ENCODE measurements at regions of chr13 and their contacts with region 1.

Region 1: DNA sequence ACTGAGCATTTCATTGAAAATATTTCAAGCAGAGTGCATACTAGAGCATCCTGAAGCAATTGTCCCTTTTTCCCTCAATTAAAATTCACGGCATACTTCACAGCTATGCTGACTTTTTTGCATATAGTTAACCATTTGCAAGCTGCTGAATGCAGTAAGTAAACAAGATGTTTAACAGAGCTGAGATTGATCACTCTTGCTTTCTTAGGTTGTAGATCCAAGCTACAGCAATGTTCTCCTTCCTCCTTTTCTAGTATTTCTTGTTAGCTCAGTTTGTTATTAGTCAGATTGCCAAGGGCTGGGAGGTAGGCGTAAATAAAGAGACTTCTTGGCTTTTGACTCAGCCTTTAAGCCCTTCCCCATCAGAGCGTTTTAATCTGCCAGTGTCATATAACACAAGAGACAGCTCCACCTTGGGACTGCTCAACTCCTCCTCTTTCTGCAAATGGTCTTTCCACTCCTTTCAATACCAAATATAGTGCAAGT is at the start of gene SLITRK6:
- DNase-seq: peak; percentile 90
- H3K4me3 Mint-ChIP-seq: peak within 1 kb of the TSS; percentile 74
- H3K27ac Mint-ChIP-seq: peak within 1 kb of the TSS; percentile 91
- H3K4me1 Mint-ChIP-seq: peaks cover 15% of the 10 kb centered on the region
- H3K27me3 Mint-ChIP-seq: no peaks in the 10 kb centered on the region
- CTCF ChIP-seq: no peak
- total RNA-seq, gene SLITRK6: 5.5 and 12.0 TPM in 2 replicates

Region 2: DNA sequence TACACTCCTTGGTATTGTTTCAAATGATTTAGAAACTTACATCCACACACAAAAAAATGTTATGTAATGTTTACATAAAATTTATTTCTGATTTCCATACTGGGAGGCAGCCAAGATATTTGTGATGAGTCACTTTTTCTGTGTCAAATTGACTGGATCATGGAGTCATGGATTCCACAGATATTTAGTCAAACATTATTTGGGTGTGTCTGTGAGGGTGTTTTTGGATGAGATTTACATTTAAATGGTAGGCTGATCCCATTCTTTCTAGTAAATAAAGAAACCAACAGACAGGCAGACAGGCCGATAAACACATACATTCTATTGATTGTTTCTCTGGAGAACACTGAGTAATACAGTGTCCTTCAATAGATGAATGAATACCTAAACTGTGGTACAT is 562.7 kb before region 1 on chr13:
- CTCF ChIA-PET with region 1: interaction called, 3 read pairs
- POLR2A ChIA-PET with region 1: interaction called, 3 read pairs
- intact Hi-C with region 1: loop called (anchors 10 kb)
- DNase-seq: peak; percentile 92
- H3K4me3 Mint-ChIP-seq: peak overlapping the region; percentile 55
- H3K27ac Mint-ChIP-seq: peak overlapping the region; percentile 88
- H3K4me1 Mint-ChIP-seq: peaks cover 19% of the 10 kb centered on the region
- H3K27me3 Mint-ChIP-seq: no peaks in the 10 kb centered on the region
- CTCF ChIP-seq: no peak

Region 3: GRCh38 chr13:85261757-85262346 is 537.3 kb before region 1 on chr13:
- CTCF ChIA-PET with region 1: no interaction called
- POLR2A ChIA-PET with region 1: no interaction called
- intact Hi-C with region 1: loop called (anchors 5 kb)
- DNase-seq: peak; percentile 50
- H3K4me3 Mint-ChIP-seq: no peak overlapping the region
- H3K27ac Mint-ChIP-seq: no peak overlapping the region
- H3K4me1 Mint-ChIP-seq: peaks cover 22% of the 10 kb centered on the region
- H3K27me3 Mint-ChIP-seq: no peaks in the 10 kb centered on the region
- CTCF ChIP-seq: peak; percentile 55

Region 4: GRCh38 chr13:85508683-85509329 is 290.3 kb before region 1 on chr13:
- CTCF ChIA-PET with region 1: interaction called, 6 read pairs
- POLR2A ChIA-PET with region 1: interaction called, 3 read pairs
- intact Hi-C with region 1: loop called (anchors 10 kb)
- DNase-seq: peak; percentile 56
- H3K4me3 Mint-ChIP-seq: no peak overlapping the region
- H3K27ac Mint-ChIP-seq: peak overlapping the region; percentile 77
- H3K4me1 Mint-ChIP-seq: peaks cover 26% of the 10 kb centered on the region
- H3K27me3 Mint-ChIP-seq: no peaks in the 10 kb centered on the region
- CTCF ChIP-seq: no peak

Region 5: DNA sequence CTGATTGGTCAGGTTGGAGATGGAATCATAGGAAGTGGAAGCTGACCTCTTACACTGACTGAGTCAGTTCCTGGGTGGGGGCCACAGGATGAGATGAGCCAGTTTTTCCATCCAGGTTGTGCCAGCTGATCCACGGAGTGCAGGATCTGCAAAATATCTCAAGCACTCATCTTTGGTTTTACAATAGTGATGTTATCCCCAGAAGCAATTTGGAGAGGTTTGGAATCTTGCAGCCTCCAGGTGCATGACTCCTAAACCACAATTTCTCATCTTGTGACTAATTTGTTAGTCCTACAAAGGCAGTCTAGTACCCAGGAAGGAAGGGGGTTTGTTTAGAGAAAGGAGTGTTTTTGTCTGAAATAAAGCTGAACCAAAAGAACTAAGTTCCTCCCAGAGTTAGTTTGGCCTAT is 212.7 kb before region 1 on chr13:
- CTCF ChIA-PET with region 1: interaction called, 12 read pairs
- POLR2A ChIA-PET with region 1: interaction called, 17 read pairs
- intact Hi-C with region 1: loop called (anchors 1 kb)
- DNase-seq: peak; percentile 91
- H3K4me3 Mint-ChIP-seq: no peak overlapping the region
- H3K27ac Mint-ChIP-seq: peak overlapping the region; percentile 20
- H3K4me1 Mint-ChIP-seq: peaks cover 37% of the 10 kb centered on the region
- H3K27me3 Mint-ChIP-seq: no peaks in the 10 kb centered on the region
- CTCF ChIP-seq: no peak

Region 6: GRCh38 chr13:85659493-85659892 is 139.6 kb before region 1 on chr13:
- CTCF ChIA-PET with region 1: no interaction called
- POLR2A ChIA-PET with region 1: interaction called, 3 read pairs
- intact Hi-C with region 1: loop called (anchors 5 kb)
- DNase-seq: peak; percentile 81
- H3K4me3 Mint-ChIP-seq: peak overlapping the region; percentile 13
- H3K27ac Mint-ChIP-seq: peak overlapping the region; percentile 33
- H3K4me1 Mint-ChIP-seq: peaks cover 15% of the 10 kb centered on the region
- H3K27me3 Mint-ChIP-seq: no peaks in the 10 kb centered on the region
- CTCF ChIP-seq: no peak

Region 7: DNA sequence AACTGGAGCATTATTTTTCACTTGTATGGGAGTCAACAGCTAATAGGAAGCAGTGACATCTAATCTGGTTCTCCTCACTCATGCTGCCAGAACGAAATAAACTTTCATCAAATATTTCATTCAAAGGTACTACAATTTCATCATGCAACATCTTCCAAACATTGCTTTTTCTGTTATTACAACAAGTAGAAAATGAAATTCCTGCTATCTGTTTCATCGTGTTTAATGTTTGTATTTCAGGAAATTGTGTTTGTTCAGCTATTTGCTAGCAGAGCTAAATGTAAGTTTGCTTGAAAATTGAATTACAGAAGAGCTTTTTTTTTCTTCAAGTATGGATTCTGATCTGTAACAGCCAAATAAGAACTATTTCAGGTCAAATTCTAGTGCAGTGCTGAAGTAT is 90.1 kb before region 1 on chr13:
- CTCF ChIA-PET with region 1: interaction called, 5 read pairs
- POLR2A ChIA-PET with region 1: no interaction called
- intact Hi-C with region 1: loop called (anchors 5 kb)
- DNase-seq: no peak
- H3K4me3 Mint-ChIP-seq: no peak overlapping the region
- H3K27ac Mint-ChIP-seq: peak overlapping the region; percentile 72
- H3K4me1 Mint-ChIP-seq: no peaks in the 10 kb centered on the region
- H3K27me3 Mint-ChIP-seq: no peaks in the 10 kb centered on the region
- CTCF ChIP-seq: no peak

Region 8: DNA sequence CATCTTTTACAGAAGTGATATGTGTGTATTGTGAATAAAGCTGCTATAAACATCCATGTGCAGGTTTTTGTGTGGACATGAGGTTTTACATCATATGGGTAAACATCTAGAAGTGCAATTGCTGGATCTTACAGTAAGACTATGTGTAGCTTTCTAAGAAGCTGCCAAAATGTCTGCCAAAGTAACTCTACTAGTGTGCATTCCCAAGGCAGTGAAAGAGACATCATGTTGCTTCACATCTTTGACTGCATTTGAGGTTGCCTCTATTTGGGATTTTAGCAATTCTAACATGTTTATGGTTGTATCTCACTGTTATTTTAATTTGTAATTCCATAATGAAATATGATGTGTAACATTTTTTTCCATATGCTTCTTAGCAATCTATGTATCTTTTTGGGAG is 30.2 kb before region 1 on chr13:
- CTCF ChIA-PET with region 1: no interaction called
- POLR2A ChIA-PET with region 1: no interaction called
- intact Hi-C with region 1: no loop called
- DNase-seq: no peak
- H3K4me3 Mint-ChIP-seq: no peak overlapping the region
- H3K27ac Mint-ChIP-seq: no peak overlapping the region
- H3K4me1 Mint-ChIP-seq: peaks cover 8% of the 10 kb centered on the region
- H3K27me3 Mint-ChIP-seq: no peaks in the 10 kb centered on the region
- CTCF ChIP-seq: no peak

Measured in MCF 10A (cell line).